ENCODE measurements at regions of chr10 and their contacts with region 1.

Region 1: DNA sequence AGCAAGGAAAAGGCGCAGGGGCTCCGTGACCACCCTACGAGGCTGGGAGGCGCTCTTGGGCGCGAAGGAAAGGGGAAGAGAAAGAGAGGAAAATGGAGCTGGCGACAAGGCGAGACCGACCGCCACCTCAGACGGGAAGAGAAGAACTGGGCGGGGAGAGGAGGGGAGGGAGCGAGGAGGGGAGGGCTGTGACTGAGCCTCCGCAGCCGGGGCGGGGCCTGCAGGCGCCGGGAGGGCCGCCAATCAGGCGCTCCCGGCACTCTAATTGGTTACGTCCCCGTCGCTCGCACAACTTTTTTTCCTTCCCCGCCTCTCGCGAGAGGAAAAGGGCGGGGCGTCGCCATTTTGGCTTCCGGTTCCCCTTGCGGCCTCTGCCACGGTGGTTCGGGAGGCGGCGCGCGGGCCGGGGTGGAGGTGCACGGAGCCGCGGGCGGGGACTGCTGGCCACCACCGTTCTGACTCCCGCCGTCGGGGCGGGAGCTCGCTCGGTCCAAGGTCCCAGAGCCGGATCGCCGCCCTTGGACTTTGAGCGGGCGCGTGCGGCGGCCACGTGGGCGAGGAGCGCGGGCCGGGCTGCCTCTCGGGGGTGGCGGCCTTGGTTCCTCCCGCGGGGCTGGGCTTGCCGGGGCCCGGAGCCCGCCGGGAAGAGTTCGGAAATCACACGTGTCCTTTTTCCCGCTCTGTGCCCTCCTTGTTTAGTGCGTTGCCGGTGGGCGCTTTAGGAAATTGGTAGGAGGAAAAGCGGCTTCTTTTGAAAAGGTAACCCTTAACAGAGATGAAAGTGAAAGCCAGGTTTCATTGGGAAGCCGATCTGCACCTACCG is at the start of gene GDI2:
- DNase-seq: peak; percentile 91 to 99 (median 96)
- ATAC-seq: peak; percentile 89 to 93
- H3K4me3 Mint-ChIP-seq: peak within 1 kb of the TSS; percentile 85 to 98 (median 94)
- H3K27ac Mint-ChIP-seq: peak within 1 kb of the TSS; percentile 91 to 98 (median 96)
- H3K4me1 Mint-ChIP-seq: peaks cover 18 to 75% (median 63%) of the 10 kb centered on the region in 4 donors
- H3K27me3 Mint-ChIP-seq: no peaks in the 10 kb centered on the region
- polyA plus RNA-seq, gene GDI2: 145 to 171 (median 157) TPM

Region 2: GRCh38 chr10:5684318-5684970 is 129.1 kb before region 1 on chr10 and contains the start of gene TASOR2:
- POLR2A ChIA-PET with region 1: interaction called, 16 read pairs
- DNase-seq: peak; percentile 90 to 97 (median 95)
- ATAC-seq: peak; percentile 82 to 88
- H3K4me3 Mint-ChIP-seq: peak within 1 kb of the TSS; percentile 92 to 99 (median 97)
- H3K27ac Mint-ChIP-seq: peak within 1 kb of the TSS; percentile 95 to 99 (median 98)
- H3K4me1 Mint-ChIP-seq: peaks cover 17 to 50% (median 45%) of the 10 kb centered on the region in 4 donors
- H3K27me3 Mint-ChIP-seq: peaks cover 0 to 3% (median 0%) of the 10 kb centered on the region in 5 donors
- polyA plus RNA-seq, gene TASOR2: 14.1 to 17.3 (median 14.9) TPM

Region 3: GRCh38 chr10:5732141-5732540 is 81.4 kb before region 1 on chr10:
- POLR2A ChIA-PET with region 1: no interaction called
- DNase-seq: no peak
- ATAC-seq: no peak
- H3K4me3 Mint-ChIP-seq: no peak overlapping the region
- H3K27ac Mint-ChIP-seq: peak overlapping the region in 5 of 10 donors; percentile 6 to 61 (median 12)
- H3K4me1 Mint-ChIP-seq: peaks cover 0 to 14% (median 11%) of the 10 kb centered on the region in 4 donors
- H3K27me3 Mint-ChIP-seq: no peaks in the 10 kb centered on the region

Region 4: GRCh38 chr10:5764422-5765297 is 48.8 kb before region 1 on chr10:
- POLR2A ChIA-PET with region 1: interaction called, 10 read pairs
- DNase-seq: no peak
- ATAC-seq: no peak
- H3K4me3 Mint-ChIP-seq: no peak overlapping the region
- H3K27ac Mint-ChIP-seq: peak overlapping the region in 8 of 10 donors; percentile 7 to 66 (median 38)
- H3K4me1 Mint-ChIP-seq: peaks cover 0 to 6% (median 1%) of the 10 kb centered on the region in 4 donors
- H3K27me3 Mint-ChIP-seq: no peaks in the 10 kb centered on the region

Region 5: DNA sequence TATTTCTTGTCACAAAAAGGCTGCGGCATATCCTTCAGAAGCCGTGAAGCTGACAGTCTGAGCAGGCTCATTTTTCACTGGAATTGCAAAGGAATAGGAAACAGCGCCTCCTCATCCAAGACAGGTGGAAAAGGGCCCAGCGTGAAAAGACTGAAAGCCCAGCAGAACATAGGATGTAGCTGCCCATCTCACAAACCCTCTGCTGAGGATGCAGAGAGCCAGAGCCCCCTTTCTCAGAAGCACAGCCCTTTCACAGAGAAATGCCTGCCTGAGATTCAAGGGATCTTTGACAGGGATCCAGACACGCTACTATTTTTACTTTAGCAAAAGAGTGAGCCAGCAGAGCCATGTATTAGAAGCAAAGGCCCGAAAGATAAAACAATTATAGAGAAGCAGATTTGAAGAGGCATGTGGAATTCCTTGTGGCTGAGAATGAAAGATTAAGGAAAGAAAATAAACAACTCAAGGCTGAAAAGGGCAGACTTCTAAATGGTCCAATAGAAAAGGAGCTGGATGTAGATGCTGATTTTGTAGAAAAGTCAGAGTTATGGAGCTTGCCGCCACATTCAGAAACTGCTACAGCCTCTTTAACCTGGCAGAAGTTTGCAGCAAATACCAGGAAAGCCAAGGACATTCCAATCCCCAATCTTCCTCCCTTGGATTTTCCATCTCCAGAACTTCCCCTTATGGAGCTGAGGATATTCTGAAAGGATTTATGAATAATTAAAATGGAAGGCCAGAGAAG is 37.2 kb before region 1 on chr10:
- POLR2A ChIA-PET with region 1: interaction called, 19 read pairs
- DNase-seq: no peak
- ATAC-seq: peak in 1 of 2 donors; percentile 14
- H3K4me3 Mint-ChIP-seq: peak overlapping the region; percentile 43 to 81 (median 76)
- H3K27ac Mint-ChIP-seq: peak overlapping the region; percentile 87 to 97 (median 92)
- H3K4me1 Mint-ChIP-seq: peaks cover 18 to 62% (median 39%) of the 10 kb centered on the region in 4 donors
- H3K27me3 Mint-ChIP-seq: no peaks in the 10 kb centered on the region

Region 6: DNA sequence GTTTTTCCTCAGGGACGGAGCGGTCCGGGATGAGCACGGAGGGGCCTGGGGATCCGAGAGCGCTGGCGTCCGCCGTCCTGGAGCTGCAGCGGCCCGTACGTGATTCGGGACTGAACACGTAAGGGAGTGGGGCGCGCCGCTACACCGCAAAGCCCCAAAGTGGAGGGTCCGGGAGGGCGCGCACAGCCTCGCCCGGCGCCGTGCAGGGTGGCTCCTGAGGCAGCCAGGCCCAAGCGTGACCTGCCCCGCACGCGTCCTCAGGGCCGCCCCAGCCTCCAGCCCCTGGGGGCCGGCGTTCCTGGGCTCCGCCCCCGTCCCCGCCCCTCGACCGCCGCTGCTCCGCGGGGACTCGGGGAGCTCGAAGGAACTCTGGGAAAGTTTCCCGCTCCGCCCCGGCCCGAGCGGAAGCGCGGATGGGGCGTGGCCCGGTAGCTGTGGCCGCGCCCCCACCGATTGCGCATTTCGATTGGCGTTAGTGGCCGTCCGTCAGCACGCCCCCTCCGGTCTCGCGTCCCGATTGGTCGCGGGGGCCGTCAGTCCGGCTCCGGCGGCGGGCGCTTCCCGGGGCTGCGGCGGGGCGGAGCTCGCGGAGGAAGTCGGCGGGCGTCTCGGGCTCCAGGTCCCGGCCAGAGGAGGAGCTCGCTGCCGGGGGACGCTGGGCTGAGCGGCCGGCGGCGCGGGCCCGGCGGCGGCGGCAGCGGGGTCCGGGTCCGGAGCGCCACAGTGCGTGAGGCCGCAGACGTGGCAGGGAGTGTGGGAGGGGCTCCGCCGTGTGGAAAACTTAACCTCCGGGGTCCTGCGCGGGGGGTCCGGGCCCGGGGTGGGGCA is 76.3 kb after region 1 on chr10 and contains the starts of genes ANKRD16 and FBH1:
- POLR2A ChIA-PET with region 1: interaction called, 20 read pairs
- DNase-seq: peak; percentile 93 to 98 (median 96)
- ATAC-seq: peak; percentile 84 to 87
- H3K4me3 Mint-ChIP-seq: peak within 1 kb of the TSS; percentile 85 to 97 (median 94)
- H3K27ac Mint-ChIP-seq: peak within 1 kb of the TSS; percentile 81 to 92 (median 86)
- H3K4me1 Mint-ChIP-seq: peaks cover 31 to 58% (median 53%) of the 10 kb centered on the region in 4 donors
- H3K27me3 Mint-ChIP-seq: no peaks in the 10 kb centered on the region
- polyA plus RNA-seq, gene ANKRD16: 3.0 to 5.9 (median 5.8) TPM
- polyA plus RNA-seq, gene FBH1: 48.4 to 76.5 (median 50.5) TPM

Region 7: GRCh38 chr10:5915451-5915850 is 102.0 kb after region 1 on chr10:
- POLR2A ChIA-PET with region 1: no interaction called
- DNase-seq: no peak
- ATAC-seq: no peak
- H3K4me3 Mint-ChIP-seq: no peak overlapping the region
- H3K27ac Mint-ChIP-seq: no peak overlapping the region
- H3K4me1 Mint-ChIP-seq: peaks cover 0 to 7% (median 3%) of the 10 kb centered on the region in 4 donors
- H3K27me3 Mint-ChIP-seq: no peaks in the 10 kb centered on the region

Measured in naive thymus-derived CD8-positive, alpha-beta T cell (primary cell).